ENCODE measurements at regions of chr17 and their contacts with region 1.

Region 1: DNA sequence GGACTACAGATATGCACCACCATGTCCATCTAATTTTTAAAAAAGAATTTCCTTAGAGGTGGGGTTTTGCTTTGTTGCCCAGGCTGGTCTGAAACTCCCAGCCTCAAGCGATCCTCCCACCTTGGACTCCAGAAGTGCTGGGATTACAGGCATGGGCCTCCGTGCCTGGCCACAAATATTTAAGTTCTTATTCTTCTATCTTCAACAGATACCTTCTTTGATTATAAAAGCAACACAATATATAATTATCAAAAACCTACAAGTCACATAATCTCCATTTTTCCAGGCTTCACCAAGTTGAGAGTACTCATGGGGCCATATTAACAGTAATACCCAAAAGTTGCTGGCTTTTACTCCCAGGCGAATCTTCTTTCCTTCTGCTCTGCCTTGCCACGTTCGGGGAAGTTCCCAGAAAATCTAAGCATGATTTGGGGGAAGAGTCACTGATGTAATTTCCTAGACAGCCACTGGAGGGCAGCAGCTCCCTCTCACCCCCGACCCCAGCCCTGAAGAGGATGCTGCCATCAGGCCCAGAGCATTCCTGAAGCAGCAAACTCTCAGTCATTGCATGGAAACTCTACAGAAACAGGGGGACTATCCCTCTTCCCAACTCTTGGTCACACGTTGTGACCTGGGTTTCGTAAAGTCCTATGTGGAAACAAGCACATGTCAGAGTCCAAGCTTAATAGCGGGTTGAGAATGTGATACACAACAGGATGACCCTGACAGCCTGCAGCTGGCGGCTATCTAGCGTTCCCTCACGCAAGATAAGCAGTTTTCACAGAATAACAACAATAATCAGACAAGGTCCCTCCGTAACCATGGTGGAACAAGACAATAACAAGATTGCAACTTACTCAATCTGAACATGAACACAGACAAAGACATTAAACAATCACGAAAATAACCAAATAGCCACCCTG is 43.9 kb upstream of the DHX40 start:
- DNase-seq: peak; percentile 49
- ATAC-seq: peak; percentile 98
- H3K4me3 ChIP-seq: no peak overlapping the region
- H3K27ac ChIP-seq: no peak overlapping the region
- H3K4me1 ChIP-seq: peaks cover 0 to 10% of the 10 kb centered on the region in 2 experiments; a peak in 2 of 4 replicates
- H3K27me3 ChIP-seq: no peaks in the 10 kb centered on the region
- CTCF ChIP-seq: peak; percentile 82 to 98 (median 96)
- POLR2A ChIP-seq: no peak
- RAD21 ChIP-seq: peak; percentile 92

Region 2: DNA sequence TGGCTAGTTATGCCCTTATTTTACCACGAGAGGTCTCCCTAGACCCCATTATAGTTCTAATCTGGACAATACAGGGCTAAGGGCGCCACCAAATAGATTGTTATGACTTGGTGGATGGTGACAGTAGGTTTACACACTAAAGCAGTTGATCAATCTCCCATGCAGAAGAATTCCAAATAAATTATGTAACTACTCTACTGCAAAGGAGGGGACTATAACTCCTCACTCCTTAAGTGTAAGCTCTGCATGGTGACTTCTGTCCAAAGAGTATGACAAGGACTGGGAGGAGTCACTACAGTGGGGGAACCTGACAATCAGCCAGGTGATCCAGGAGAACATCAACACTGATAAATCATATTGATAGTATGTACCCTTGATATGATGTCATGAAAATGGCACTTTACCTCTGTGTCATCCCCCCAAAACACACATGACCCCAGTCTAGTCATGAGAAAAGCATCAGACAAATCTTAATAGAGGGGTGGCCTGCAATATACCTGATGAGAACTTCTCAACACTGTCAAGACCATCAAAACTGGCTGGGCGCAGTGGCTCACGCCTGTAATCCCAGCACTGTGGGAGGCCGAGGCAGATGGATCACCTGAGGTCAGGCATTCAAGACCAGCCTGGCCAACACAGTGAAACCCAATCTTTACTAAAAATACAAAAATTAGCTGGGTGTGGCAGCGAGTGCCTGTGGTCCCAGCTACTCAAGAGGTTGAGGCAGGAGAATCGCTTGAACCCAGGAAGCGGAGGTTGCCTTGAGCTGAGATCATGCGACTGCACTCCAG is 210.1 kb before region 1 on chr17:
- CTCF ChIA-PET with region 1: interaction called, 11 read pairs
- POLR2A ChIA-PET with region 1: no interaction called
- RAD21 ChIA-PET with region 1: interaction called in 1 of 2 experiments, 4 read pairs
- intact Hi-C with region 1: no loop called
- DNase-seq: peak; percentile 78
- ATAC-seq: peak; percentile 93
- H3K4me3 ChIP-seq: no peak overlapping the region
- H3K27ac ChIP-seq: no peak overlapping the region
- H3K4me1 ChIP-seq: peaks cover 3 to 13% of the 10 kb centered on the region in 2 experiments; a peak in 3 of 4 replicates
- H3K27me3 ChIP-seq: no peaks in the 10 kb centered on the region
- CTCF ChIP-seq: peak; percentile 84 to 99 (median 97); a peak in 5 of 6 replicates
- POLR2A ChIP-seq: no peak
- RAD21 ChIP-seq: peak; percentile 98

Region 3: GRCh38 chr17:60231234-60231633 is 709.8 kb after region 1 on chr17:
- CTCF ChIA-PET with region 1: no interaction called
- POLR2A ChIA-PET with region 1: no interaction called
- RAD21 ChIA-PET with region 1: no interaction called
- intact Hi-C with region 1: no loop called
- DNase-seq: peak; percentile 10
- ATAC-seq: peak; percentile 80
- H3K4me3 ChIP-seq: no peak overlapping the region
- H3K27ac ChIP-seq: no peak overlapping the region
- H3K4me1 ChIP-seq: peaks cover 0 to 7% of the 10 kb centered on the region in 2 experiments; a peak in 2 of 4 replicates
- H3K27me3 ChIP-seq: no peaks in the 10 kb centered on the region
- CTCF ChIP-seq: peak; percentile 52 to 69 (median 62); a peak in 5 of 6 replicates
- POLR2A ChIP-seq: no peak
- RAD21 ChIP-seq: peak; percentile 68

Measured in HCT116 (cell line).